OCI-LY7 (cell line): ENCODE measurements at regions of chr4 and their contacts with region 1.

Region 1: GRCh38 chr4:51895813-51896408 is 53.0 kb downstream of the DCUN1D4 start:
- DNase-seq: peak; percentile 76
- H3K4me3 ChIP-seq: no peak overlapping the region
- H3K27ac ChIP-seq: peak overlapping the region; percentile 27
- H3K4me1 ChIP-seq: peaks cover 11% of the 10 kb centered on the region
- CTCF ChIP-seq: peak; percentile 91

Region 2: DNA sequence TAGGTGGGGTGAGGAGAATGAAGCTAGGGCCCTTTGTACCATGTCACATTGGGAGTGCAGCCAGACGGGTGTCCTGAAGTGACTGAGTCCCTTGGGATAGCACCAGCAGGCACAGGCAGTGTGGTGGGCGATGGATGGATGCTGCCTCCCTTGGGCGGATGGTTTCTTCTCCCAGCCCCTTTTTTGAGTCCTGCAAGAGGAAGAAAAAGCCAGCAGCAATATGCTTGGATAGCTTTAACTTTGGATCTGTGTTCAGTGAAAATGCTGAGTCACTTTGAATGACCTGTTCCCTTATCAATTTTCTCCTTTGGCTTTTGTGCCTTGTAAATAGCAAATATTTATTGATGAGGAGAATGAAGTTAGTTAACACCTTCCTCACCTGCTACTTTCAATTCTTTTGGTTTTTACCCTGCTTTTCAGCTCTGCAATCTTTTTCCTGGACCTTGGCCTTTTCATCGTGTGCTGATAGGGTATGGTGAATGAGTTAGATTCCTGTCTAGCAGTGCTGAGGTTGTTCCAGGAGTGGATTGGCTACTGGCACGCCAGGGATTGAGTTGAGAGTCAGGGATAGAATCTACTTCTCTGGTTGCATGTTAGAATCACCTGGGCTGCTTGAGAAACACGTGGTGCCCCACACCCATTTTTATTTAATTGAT is 42.8 kb before region 1 on chr4:
- CTCF ChIA-PET with region 1: no interaction called
- POLR2A ChIA-PET with region 1: no interaction called
- intact Hi-C with region 1: loop called (anchors 5 kb)
- DNase-seq: no peak
- H3K4me3 ChIP-seq: no peak overlapping the region
- H3K27ac ChIP-seq: no peak overlapping the region
- H3K4me1 ChIP-seq: peaks cover 16% of the 10 kb centered on the region
- CTCF ChIP-seq: no peak

Region 3: GRCh38 chr4:52028969-52029368 is 133.1 kb after region 1 on chr4:
- CTCF ChIA-PET with region 1: no interaction called
- POLR2A ChIA-PET with region 1: no interaction called
- intact Hi-C with region 1: loop called (anchors 1 kb)
- DNase-seq: no peak
- H3K4me3 ChIP-seq: no peak overlapping the region
- H3K27ac ChIP-seq: no peak overlapping the region
- H3K4me1 ChIP-seq: no peaks in the 10 kb centered on the region
- CTCF ChIP-seq: no peak